G401 (cell line): ENCODE measurements at regions of chr2 and their contacts with region 1.

Region 1: GRCh38 chr2:108351889-108352288 is 25.9 kb upstream of the SULT1C4 start:
- DNase-seq: no peak

Region 2: GRCh38 chr2:108392029-108392428 is 40.1 kb after region 1 on chr2:
- in situ Hi-C with region 1: loop called (anchors 5 kb)
- DNase-seq: no peak